ENCODE measurements at regions of chr12 and their contacts with region 1.

Region 1: GRCh38 chr12:108664338-108665258 is 30.9 kb upstream of the SELPLG start:
- DNase-seq: peak; percentile 92
- H3K4me3 ChIP-seq: peak overlapping the region; percentile 46
- H3K27ac ChIP-seq: peak overlapping the region; percentile 94
- H3K4me1 ChIP-seq: peaks cover 83% of the 10 kb centered on the region
- CTCF ChIP-seq: peak; percentile 99

Region 2: GRCh38 chr12:108649669-108650068 is 14.9 kb before region 1 on chr12:
- CTCF ChIA-PET with region 1: interaction called, 6 read pairs
- POLR2A ChIA-PET with region 1: interaction called, 36 read pairs
- intact Hi-C with region 1: no loop called
- DNase-seq: no peak
- H3K4me3 ChIP-seq: no peak overlapping the region
- H3K27ac ChIP-seq: no peak overlapping the region
- H3K4me1 ChIP-seq: peaks cover 82% of the 10 kb centered on the region
- CTCF ChIP-seq: no peak

Region 3: DNA sequence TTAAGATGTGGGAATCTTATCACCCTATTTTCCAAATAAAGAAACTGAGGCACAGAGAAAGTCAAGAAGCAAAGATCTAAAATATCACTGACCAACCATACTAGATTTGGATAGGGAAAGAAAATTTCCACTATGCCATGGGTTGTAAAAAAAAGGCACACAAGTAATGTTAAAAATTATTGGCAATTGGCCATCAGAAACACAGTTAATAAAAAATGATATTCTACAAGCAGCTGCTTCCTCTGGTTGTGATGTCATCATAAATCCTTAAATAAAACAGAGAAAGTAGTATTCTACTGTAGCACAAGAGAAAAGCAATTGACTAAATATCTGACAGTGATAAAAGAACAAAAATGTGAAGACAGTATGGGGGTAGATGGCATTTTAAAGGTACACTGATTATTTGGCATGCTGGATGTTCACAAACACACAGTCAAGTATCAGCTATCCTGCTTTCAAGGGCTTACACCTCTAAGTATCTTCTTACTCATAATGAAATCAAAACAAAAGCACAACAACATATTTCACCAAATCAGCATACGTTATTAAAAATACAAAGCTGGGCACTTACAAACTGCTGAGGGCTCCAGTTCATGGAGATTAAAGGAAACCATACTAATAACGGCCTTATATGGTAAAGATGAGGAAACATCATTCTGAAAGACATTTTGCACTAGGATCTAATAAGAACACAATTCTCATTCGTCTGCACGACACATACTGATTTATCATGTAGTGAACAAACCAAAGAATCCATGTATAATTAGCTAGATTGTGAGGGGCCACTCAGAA is 21.1 kb after region 1 on chr12:
- CTCF ChIA-PET with region 1: interaction called, 4 read pairs
- POLR2A ChIA-PET with region 1: interaction called, 27 read pairs
- intact Hi-C with region 1: no loop called
- DNase-seq: no peak
- H3K4me3 ChIP-seq: no peak overlapping the region
- H3K27ac ChIP-seq: no peak overlapping the region
- H3K4me1 ChIP-seq: peaks cover 29% of the 10 kb centered on the region
- CTCF ChIP-seq: no peak

Region 4: GRCh38 chr12:108803428-108804105 is 139.0 kb after region 1 on chr12:
- CTCF ChIA-PET with region 1: interaction called, 15 read pairs
- POLR2A ChIA-PET with region 1: interaction called, 30 read pairs
- intact Hi-C with region 1: loop called (anchors 1 kb)
- DNase-seq: peak; percentile 84
- H3K4me3 ChIP-seq: no peak overlapping the region
- H3K27ac ChIP-seq: no peak overlapping the region
- H3K4me1 ChIP-seq: peaks cover 25% of the 10 kb centered on the region
- CTCF ChIP-seq: peak; percentile 99

Region 5: DNA sequence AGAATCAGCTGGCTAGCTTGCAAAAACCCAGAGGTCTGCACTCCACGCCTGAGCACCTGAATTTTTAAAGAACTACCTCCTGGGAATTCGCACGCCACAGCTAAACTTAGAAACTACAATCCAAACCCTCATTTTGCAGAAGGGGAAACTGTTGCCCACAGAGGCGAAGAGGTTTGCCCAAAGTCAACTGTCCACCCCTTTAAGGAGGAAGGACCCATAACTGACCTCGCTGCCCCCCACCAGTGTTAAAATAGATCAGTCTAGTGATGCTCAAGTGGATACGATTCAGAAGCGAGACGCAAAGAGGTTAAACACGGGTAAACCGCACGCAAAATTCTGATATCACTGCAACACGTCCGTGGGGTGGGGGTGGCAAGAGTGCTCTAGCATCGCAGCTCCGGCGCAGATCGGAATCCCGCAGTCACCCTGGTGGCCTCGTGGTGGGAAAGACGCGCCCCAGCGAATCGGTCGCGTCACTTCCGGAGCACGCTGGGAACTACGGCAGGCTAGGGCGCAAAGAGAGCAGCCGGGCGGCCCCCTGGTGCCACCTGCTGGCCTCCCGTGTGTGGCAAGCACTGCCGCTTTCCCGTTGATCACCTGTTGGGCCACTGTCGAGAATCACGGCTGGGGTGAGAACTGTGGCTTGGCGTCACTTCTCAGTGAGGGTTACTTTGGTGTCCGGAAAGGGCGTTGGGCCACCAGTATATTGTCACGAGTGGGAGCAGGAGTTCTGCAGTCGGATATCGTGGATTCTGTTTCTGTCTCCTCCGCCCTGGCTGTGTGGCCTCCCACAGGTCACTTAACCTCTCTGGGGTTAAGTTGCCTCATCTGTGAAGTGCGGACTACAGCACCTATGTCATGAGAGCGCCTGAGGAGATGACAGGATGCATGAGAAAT is 428.7 kb after region 1 on chr12 and contains the start of gene ALKBH2:
- CTCF ChIA-PET with region 1: interaction called, 3 read pairs
- POLR2A ChIA-PET with region 1: no interaction called
- intact Hi-C with region 1: loop called (anchors 2 kb)
- DNase-seq: peak; percentile 96
- H3K4me3 ChIP-seq: peak within 1 kb of the TSS; percentile 84
- H3K27ac ChIP-seq: peak within 1 kb of the TSS; percentile 63
- H3K4me1 ChIP-seq: peaks cover 62% of the 10 kb centered on the region
- CTCF ChIP-seq: peak; percentile 89
- total RNA-seq, gene ALKBH2: 70.3 and 76.8 TPM in 2 replicates

Measured in OCI-LY7 (cell line).